ENCODE measurements at regions of chr2 and their contacts with region 1.

Region 1: GRCh38 chr2:110812726-110813645 is 80.6 kb downstream of the ACOXL start:
- DNase-seq: no peak
- ATAC-seq: no peak
- H3K4me3 ChIP-seq: no peak overlapping the region
- H3K27ac ChIP-seq: no peak overlapping the region
- H3K4me1 ChIP-seq: peaks cover 5% of the 10 kb centered on the region; the same call in 2 of the 3 replicates
- CTCF ChIP-seq: no peak
- EP300 ChIP-seq: no peak
- POLR2A ChIP-seq: no peak
- RAD21 ChIP-seq: no peak

Region 2: DNA sequence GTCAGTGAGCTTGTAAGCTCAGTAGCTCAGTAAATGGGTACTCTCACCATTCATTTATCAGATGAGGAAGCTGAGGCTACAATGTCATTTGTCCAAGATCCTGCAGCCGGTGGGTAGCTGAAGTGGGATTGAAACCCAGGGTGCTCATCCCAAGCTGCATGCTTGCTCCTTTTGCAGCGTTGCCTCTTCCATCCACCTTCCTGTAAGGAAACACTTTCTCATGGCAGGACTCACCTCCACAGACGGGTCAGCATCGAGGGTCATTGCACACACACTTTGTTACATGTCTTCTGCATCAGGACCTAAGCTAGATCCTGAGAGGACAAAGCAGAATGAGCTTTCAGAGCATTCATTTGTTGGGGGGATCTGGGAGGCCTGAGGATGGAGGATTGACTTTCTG is 20.0 kb before region 1 on chr2:
- CTCF ChIA-PET with region 1: interaction called, 15 read pairs
- POLR2A ChIA-PET with region 1: no interaction called
- DNase-seq: no peak
- ATAC-seq: no peak
- H3K4me3 ChIP-seq: no peak overlapping the region
- H3K27ac ChIP-seq: no peak overlapping the region
- H3K4me1 ChIP-seq: no peaks in the 10 kb centered on the region
- CTCF ChIP-seq: no peak
- EP300 ChIP-seq: no peak
- POLR2A ChIP-seq: no peak
- RAD21 ChIP-seq: no peak

Region 3: GRCh38 chr2:110832740-110833139 is 19.8 kb after region 1 on chr2:
- CTCF ChIA-PET with region 1: interaction called, 12 read pairs
- POLR2A ChIA-PET with region 1: no interaction called
- DNase-seq: no peak
- ATAC-seq: no peak
- H3K4me3 ChIP-seq: no peak overlapping the region
- H3K27ac ChIP-seq: no peak overlapping the region
- H3K4me1 ChIP-seq: no peaks in the 10 kb centered on the region
- CTCF ChIP-seq: peak; percentile 10; the same call in 1 of the 3 replicates
- EP300 ChIP-seq: no peak
- POLR2A ChIP-seq: no peak
- RAD21 ChIP-seq: no peak

Region 4: DNA sequence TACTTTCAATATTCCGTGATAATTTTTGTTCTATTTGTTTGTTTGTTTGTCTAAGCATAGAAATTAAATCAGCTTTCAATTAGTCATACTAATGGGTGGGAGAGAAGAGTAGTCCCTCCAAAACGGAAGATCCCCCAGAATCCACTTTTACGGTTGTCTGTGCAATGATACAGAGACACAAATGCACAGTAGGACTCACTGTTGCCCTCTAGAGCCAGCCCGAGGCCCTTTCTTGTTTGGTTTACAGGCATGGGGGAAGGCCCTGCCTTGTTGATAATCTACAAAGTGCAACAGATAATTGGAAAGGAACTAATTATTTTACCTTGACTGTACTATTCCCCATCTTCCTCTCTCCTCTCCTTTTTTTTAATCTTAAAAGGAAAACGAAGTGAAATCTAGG is 40.5 kb after region 1 on chr2:
- CTCF ChIA-PET with region 1: interaction called, 18 read pairs
- POLR2A ChIA-PET with region 1: no interaction called
- DNase-seq: peak; percentile 38 to 44
- ATAC-seq: peak; percentile 81 to 93; a peak in 5 of 6 replicates
- H3K4me3 ChIP-seq: no peak overlapping the region
- H3K27ac ChIP-seq: no peak overlapping the region
- H3K4me1 ChIP-seq: no peaks in the 10 kb centered on the region
- CTCF ChIP-seq: peak; percentile 53; the same call in 2 of the 3 replicates
- EP300 ChIP-seq: no peak
- POLR2A ChIP-seq: no peak
- RAD21 ChIP-seq: peak in 1 of 2 experiments; percentile 37; a peak in 1 of 5 replicates

Region 5: GRCh38 chr2:111120253-111121027 is 307.5 kb after region 1 on chr2 and contains the start of gene BCL2L11:
- CTCF ChIA-PET with region 1: interaction called, 11 read pairs
- POLR2A ChIA-PET with region 1: no interaction called
- DNase-seq: peak; percentile 70 to 94
- ATAC-seq: peak; percentile 54 to 65
- H3K4me3 ChIP-seq: peak within 1 kb of the TSS; percentile 78
- H3K27ac ChIP-seq: peak within 1 kb of the TSS; percentile 91 to 94
- H3K4me1 ChIP-seq: peaks cover 21% of the 10 kb centered on the region
- CTCF ChIP-seq: peak; percentile 42
- EP300 ChIP-seq: no peak
- POLR2A ChIP-seq: peak; percentile 90
- RAD21 ChIP-seq: peak in 1 of 2 experiments; percentile 50; a peak in 1 of 5 replicates
- polyA plus RNA-seq, gene BCL2L11: 7.4 and 14.5 TPM in 2 replicates

Region 6: GRCh38 chr2:111698743-111699554 is 886.0 kb after region 1 on chr2:
- CTCF ChIA-PET with region 1: interaction called, 13 read pairs
- POLR2A ChIA-PET with region 1: no interaction called
- DNase-seq: peak; percentile 95 to 97
- ATAC-seq: peak; percentile 97 to 98
- H3K4me3 ChIP-seq: peak overlapping the region; percentile 17; the same call in 1 of the 3 replicates
- H3K27ac ChIP-seq: peak overlapping the region; percentile 88 to 91
- H3K4me1 ChIP-seq: peaks cover 37% of the 10 kb centered on the region
- CTCF ChIP-seq: peak; percentile 76
- EP300 ChIP-seq: peak; percentile 73 to 82; a peak in 3 of 5 replicates
- POLR2A ChIP-seq: no peak
- RAD21 ChIP-seq: peak; percentile 92 to 95

Measured in A549 (cell line).